Activated naive CD4-positive, alpha-beta T cell treated with anti-CD3 and anti-CD28 coated beads for 36 hours (primary cell): ENCODE measurements at regions of chr13 and their contacts with region 1.

Region 1: GRCh38 chr13:42354241-42355091 is 82.5 kb downstream of the AKAP11 start:
- DNase-seq: peak; percentile 67
- H3K4me3 Mint-ChIP-seq: peak overlapping the region; percentile 70
- H3K27ac Mint-ChIP-seq: peak overlapping the region; percentile 99
- H3K4me1 Mint-ChIP-seq: peaks cover 68% of the 10 kb centered on the region
- H3K27me3 Mint-ChIP-seq: no peaks in the 10 kb centered on the region

Region 2: GRCh38 chr13:41492404-41493260 is 861.8 kb before region 1 on chr13:
- CTCF ChIA-PET with region 1: no interaction called
- intact Hi-C with region 1: loop called (anchors 2 kb)
- DNase-seq: peak; percentile 62
- H3K4me3 Mint-ChIP-seq: peak overlapping the region; percentile 45
- H3K27ac Mint-ChIP-seq: peak overlapping the region; percentile 95
- H3K4me1 Mint-ChIP-seq: peaks cover 91% of the 10 kb centered on the region
- H3K27me3 Mint-ChIP-seq: no peaks in the 10 kb centered on the region

Region 3: GRCh38 chr13:42377640-42378382 is 23.3 kb after region 1 on chr13:
- CTCF ChIA-PET with region 1: interaction called, 12 read pairs
- intact Hi-C with region 1: loop called (anchors 1 kb)
- DNase-seq: peak; percentile 71
- H3K4me3 Mint-ChIP-seq: no peak overlapping the region
- H3K27ac Mint-ChIP-seq: peak overlapping the region; percentile 95
- H3K4me1 Mint-ChIP-seq: peaks cover 59% of the 10 kb centered on the region
- H3K27me3 Mint-ChIP-seq: no peaks in the 10 kb centered on the region

Region 4: DNA sequence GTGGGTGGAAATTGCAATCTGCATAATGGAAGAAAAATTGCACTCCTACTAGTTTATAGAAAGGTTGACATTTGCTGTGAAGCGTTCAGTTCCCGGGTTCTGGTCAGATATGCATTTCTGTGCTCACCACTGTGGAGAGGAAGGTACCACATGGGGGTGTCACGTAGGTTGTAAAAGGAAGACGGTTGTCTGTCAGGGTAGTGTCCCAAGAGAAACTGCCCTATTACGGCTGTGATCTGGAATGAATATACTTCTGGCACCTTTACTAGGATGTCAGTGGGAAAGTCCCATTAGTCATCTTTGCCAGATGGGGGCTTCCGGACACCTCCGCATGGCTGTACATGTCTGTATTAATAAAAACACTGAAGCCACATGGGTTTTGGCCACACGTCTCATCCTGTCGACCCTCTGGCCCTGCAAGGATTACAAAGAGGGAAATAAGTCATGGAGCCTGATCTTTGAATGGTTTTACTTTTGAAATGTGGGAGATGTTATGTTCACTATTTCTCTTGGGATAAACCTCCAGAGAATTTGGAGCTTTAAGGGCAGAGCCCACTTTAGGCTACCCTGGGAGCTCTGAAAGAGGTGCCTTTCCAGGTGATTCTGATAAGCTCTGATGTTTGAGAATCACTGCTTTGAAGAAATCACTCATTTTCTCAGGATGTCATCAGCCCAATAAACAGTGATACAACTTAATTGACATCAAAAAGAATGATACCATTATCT is 51.4 kb after region 1 on chr13:
- CTCF ChIA-PET with region 1: no interaction called
- intact Hi-C with region 1: loop called (anchors 1 kb)
- DNase-seq: peak; percentile 87
- H3K4me3 Mint-ChIP-seq: peak overlapping the region; percentile 51
- H3K27ac Mint-ChIP-seq: peak overlapping the region; percentile 96
- H3K4me1 Mint-ChIP-seq: peaks cover 41% of the 10 kb centered on the region
- H3K27me3 Mint-ChIP-seq: no peaks in the 10 kb centered on the region

Region 5: DNA sequence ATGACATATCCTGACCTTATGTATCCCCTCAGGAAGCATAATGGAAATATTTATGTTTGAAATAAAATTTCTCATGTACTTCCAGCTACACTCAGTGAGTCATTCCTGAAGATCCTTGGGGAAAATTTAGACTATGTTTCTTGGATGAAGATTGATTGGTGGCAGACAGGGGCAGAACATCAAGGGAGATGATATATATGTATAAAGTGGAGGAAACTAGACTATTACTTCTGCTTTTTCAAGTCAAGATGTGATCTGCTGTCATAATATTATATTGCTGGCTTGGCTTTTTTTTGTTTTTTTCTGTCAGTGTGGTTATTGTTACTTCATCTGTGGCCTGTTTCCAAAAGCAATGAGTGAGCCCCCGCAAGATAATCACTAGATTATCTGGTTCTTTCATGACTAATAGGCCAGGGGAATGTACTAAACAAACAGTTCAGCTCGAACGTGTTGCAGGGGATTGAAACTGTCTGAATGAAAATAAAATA is 132.3 kb after region 1 on chr13:
- CTCF ChIA-PET with region 1: no interaction called
- intact Hi-C with region 1: no loop called
- DNase-seq: no peak
- H3K4me3 Mint-ChIP-seq: no peak overlapping the region
- H3K27ac Mint-ChIP-seq: no peak overlapping the region
- H3K4me1 Mint-ChIP-seq: no peaks in the 10 kb centered on the region
- H3K27me3 Mint-ChIP-seq: no peaks in the 10 kb centered on the region

Region 6: GRCh38 chr13:42497798-42498197 is 143.3 kb after region 1 on chr13:
- CTCF ChIA-PET with region 1: no interaction called
- intact Hi-C with region 1: loop called (anchors 1 kb)
- DNase-seq: peak; percentile 64
- H3K4me3 Mint-ChIP-seq: no peak overlapping the region
- H3K27ac Mint-ChIP-seq: peak overlapping the region; percentile 69
- H3K4me1 Mint-ChIP-seq: peaks cover 40% of the 10 kb centered on the region
- H3K27me3 Mint-ChIP-seq: no peaks in the 10 kb centered on the region

Region 7: GRCh38 chr13:42991892-42992763 is 637.7 kb after region 1 on chr13 and contains the start of gene EPSTI1:
- CTCF ChIA-PET with region 1: no interaction called
- intact Hi-C with region 1: loop called (anchors 10 kb)
- DNase-seq: peak; percentile 84
- H3K4me3 Mint-ChIP-seq: peak within 1 kb of the TSS; percentile 87
- H3K27ac Mint-ChIP-seq: peak within 1 kb of the TSS; percentile 98
- H3K4me1 Mint-ChIP-seq: peaks cover 52% of the 10 kb centered on the region
- H3K27me3 Mint-ChIP-seq: no peaks in the 10 kb centered on the region
- total RNA-seq, gene EPSTI1: 17.4 to 19.8 TPM

Region 8: GRCh38 chr13:43797869-43798268 is 1443.4 kb after region 1 on chr13:
- CTCF ChIA-PET with region 1: no interaction called
- intact Hi-C with region 1: loop called (anchors 2 kb)
- DNase-seq: no peak
- H3K4me3 Mint-ChIP-seq: no peak overlapping the region
- H3K27ac Mint-ChIP-seq: no peak overlapping the region
- H3K4me1 Mint-ChIP-seq: peaks cover 30% of the 10 kb centered on the region
- H3K27me3 Mint-ChIP-seq: peaks cover 22% of the 10 kb centered on the region